ENCODE measurements at regions of chr2 and their contacts with region 1.

Region 1: GRCh38 chr2:196263181-196263747 is 91.9 kb upstream of the STK17B start:
- DNase-seq: no peak
- ATAC-seq: peak; percentile 76
- H3K4me3 Mint-ChIP-seq: peak overlapping the region; percentile 79
- H3K27ac Mint-ChIP-seq: peak overlapping the region; percentile 92
- H3K4me1 Mint-ChIP-seq: peaks cover 65% of the 10 kb centered on the region
- H3K27me3 Mint-ChIP-seq: no peaks in the 10 kb centered on the region

Region 2: GRCh38 chr2:196113061-196113974 is 149.9 kb before region 1 on chr2:
- POLR2A ChIA-PET with region 1: no interaction called
- DNase-seq: no peak
- ATAC-seq: no peak
- H3K4me3 Mint-ChIP-seq: no peak overlapping the region
- H3K27ac Mint-ChIP-seq: no peak overlapping the region
- H3K4me1 Mint-ChIP-seq: peaks cover 7% of the 10 kb centered on the region
- H3K27me3 Mint-ChIP-seq: no peaks in the 10 kb centered on the region

Region 3: DNA sequence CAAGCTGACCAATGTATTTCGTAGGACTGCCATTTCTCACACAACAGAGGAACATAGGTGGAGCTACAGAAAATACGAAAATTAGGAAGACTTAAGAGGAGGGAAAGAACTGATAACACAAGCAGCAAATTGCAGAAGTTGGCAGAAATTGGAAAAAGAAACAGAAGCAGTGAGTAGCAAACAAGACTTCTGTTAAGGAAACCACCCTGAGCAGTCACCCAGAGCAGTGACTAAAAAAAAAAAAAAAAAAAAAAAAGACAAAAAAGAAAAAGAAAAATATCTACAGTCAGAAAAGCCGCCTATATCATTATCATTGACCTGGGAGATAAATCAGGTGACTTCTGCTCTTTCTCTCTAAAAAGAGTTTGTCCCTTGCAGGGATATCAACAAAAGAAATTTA is 113.3 kb before region 1 on chr2:
- POLR2A ChIA-PET with region 1: interaction called, 16 read pairs
- DNase-seq: no peak
- ATAC-seq: peak; percentile 2
- H3K4me3 Mint-ChIP-seq: peak overlapping the region; percentile 69
- H3K27ac Mint-ChIP-seq: peak overlapping the region; percentile 74
- H3K4me1 Mint-ChIP-seq: peaks cover 77% of the 10 kb centered on the region
- H3K27me3 Mint-ChIP-seq: no peaks in the 10 kb centered on the region

Region 4: DNA sequence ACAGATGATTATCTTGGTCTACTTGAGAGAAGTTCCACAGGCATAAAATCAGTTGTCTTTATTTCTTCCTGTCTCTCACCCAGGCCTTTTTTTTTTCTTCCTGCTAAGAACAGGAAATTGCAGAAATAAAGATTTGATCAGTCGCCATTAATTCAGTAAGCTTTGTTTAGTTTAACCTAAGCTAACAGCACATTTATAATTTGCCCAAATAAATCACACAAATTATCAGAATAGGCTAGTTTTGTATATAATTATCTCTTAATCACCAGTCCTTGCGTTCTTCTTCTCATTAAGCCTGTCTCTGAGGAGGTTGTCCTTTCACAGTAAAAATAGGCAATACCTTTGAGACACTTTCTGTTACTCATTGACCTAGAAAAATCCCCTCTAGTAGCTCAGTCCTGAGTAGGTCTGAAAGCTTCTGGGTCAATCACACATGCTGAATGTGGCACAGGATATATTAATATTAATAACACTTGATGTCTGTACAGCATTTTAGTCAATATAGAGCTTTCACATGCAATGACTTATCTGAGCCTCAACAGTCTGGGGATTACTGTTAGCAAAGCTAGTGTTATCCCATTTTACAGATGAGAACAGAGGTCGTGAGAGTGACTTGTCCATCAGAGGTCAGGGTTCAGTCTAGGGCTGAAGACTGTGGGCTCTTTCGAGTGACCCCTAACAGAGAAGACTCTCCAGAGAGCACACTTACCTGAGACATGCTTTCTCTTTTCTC is 80.7 kb before region 1 on chr2:
- POLR2A ChIA-PET with region 1: interaction called, 145 read pairs
- DNase-seq: no peak
- ATAC-seq: peak; percentile 10
- H3K4me3 Mint-ChIP-seq: peak overlapping the region; percentile 84
- H3K27ac Mint-ChIP-seq: peak overlapping the region; percentile 96
- H3K4me1 Mint-ChIP-seq: peaks cover 62% of the 10 kb centered on the region
- H3K27me3 Mint-ChIP-seq: no peaks in the 10 kb centered on the region

Region 5: DNA sequence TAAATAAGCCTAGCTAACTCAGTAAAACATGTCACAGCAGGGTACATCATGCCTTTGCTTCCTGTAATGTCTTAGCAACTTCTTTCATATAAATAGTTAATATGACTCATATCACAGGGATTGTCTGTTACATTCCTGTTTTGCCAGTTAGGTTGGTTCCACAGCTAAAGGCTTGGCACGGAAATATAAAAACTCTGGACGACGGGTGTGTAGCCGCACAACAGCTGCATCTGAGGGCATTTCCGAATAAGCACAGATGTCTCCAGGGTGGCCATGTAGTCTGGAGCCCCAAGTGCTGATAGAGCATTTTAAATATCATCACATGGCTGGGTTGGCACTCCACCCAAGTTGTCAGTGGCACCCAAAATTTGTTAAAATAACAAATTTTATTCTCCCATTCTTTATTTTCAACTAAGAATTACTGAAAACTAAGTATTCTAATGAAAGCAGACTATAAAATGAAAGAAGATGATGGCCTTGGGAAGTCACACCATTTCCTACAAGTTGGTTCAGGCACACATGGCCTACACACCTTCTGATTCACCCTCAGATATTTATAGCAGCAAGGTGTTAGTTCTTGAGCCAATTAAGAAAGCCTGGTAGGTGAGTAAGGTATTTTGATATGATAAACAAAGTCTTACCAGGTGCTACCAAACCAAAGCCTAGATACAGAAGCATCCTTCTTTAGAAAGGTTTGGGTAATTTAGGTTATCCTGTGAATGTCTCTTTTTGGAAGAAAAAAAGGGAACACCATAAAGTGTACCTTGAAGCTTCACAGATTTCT is 30.1 kb before region 1 on chr2:
- POLR2A ChIA-PET with region 1: interaction called, 223 read pairs
- DNase-seq: no peak
- ATAC-seq: no peak
- H3K4me3 Mint-ChIP-seq: peak overlapping the region; percentile 55
- H3K27ac Mint-ChIP-seq: peak overlapping the region; percentile 88
- H3K4me1 Mint-ChIP-seq: peaks cover 82% of the 10 kb centered on the region
- H3K27me3 Mint-ChIP-seq: no peaks in the 10 kb centered on the region

Region 6: GRCh38 chr2:196277002-196277401 is 13.7 kb after region 1 on chr2:
- POLR2A ChIA-PET with region 1: interaction called, 57 read pairs
- DNase-seq: no peak
- ATAC-seq: peak; percentile 28
- H3K4me3 Mint-ChIP-seq: peak overlapping the region; percentile 82
- H3K27ac Mint-ChIP-seq: peak overlapping the region; percentile 52
- H3K4me1 Mint-ChIP-seq: peaks cover 43% of the 10 kb centered on the region
- H3K27me3 Mint-ChIP-seq: no peaks in the 10 kb centered on the region

Region 7: GRCh38 chr2:196287523-196287922 is 24.3 kb after region 1 on chr2:
- POLR2A ChIA-PET with region 1: no interaction called
- DNase-seq: no peak
- ATAC-seq: no peak
- H3K4me3 Mint-ChIP-seq: peak overlapping the region; percentile 43
- H3K27ac Mint-ChIP-seq: no peak overlapping the region
- H3K4me1 Mint-ChIP-seq: peaks cover 47% of the 10 kb centered on the region
- H3K27me3 Mint-ChIP-seq: peaks cover 2% of the 10 kb centered on the region

Region 8: GRCh38 chr2:196309691-196310090 is 46.4 kb after region 1 on chr2:
- POLR2A ChIA-PET with region 1: no interaction called
- DNase-seq: no peak
- ATAC-seq: no peak
- H3K4me3 Mint-ChIP-seq: no peak overlapping the region
- H3K27ac Mint-ChIP-seq: no peak overlapping the region
- H3K4me1 Mint-ChIP-seq: peaks cover 2% of the 10 kb centered on the region
- H3K27me3 Mint-ChIP-seq: no peaks in the 10 kb centered on the region